ENCODE measurements at regions of chr1 and their contacts with region 1.

Region 1: GRCh38 chr1:172449585-172450534 is 6.0 kb upstream of the PIGC start:
- DNase-seq: peak; percentile 53
- H3K4me3 Mint-ChIP-seq: peak overlapping the region; percentile 7
- H3K27ac Mint-ChIP-seq: peak overlapping the region; percentile 26
- H3K4me1 Mint-ChIP-seq: peaks cover 31% of the 10 kb centered on the region
- H3K27me3 Mint-ChIP-seq: no peaks in the 10 kb centered on the region

Region 2: GRCh38 chr1:172588296-172589291 is 138.7 kb after region 1 on chr1:
- CTCF ChIA-PET with region 1: no interaction called
- intact Hi-C with region 1: loop called (anchors 5 kb)
- DNase-seq: peak; percentile 14
- H3K4me3 Mint-ChIP-seq: no peak overlapping the region
- H3K27ac Mint-ChIP-seq: peak overlapping the region; percentile 16
- H3K4me1 Mint-ChIP-seq: peaks cover 23% of the 10 kb centered on the region
- H3K27me3 Mint-ChIP-seq: no peaks in the 10 kb centered on the region

Region 3: DNA sequence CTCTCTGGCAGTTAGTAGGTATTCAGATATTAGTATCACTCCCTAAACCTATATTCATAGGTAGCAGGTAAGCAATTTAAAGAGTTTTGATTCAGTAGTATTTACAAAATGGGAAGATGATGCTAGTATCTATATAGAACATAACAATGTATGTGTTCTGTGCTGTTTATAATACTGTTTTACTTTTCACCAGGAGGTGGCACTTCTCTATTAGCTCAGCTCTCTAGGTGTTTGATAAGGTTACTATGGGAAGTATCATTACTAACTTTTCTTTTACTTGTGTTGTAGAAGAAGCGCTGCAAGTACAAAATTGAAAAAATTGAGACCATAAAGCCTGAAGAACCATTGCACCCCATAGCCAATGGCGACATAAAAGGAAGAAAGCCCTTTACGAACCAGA is 159.7 kb after region 1 on chr1:
- CTCF ChIA-PET with region 1: interaction called, 4 read pairs
- intact Hi-C with region 1: loop called (anchors 2 kb)
- DNase-seq: no peak
- H3K4me3 Mint-ChIP-seq: no peak overlapping the region
- H3K27ac Mint-ChIP-seq: no peak overlapping the region
- H3K4me1 Mint-ChIP-seq: peaks cover 2% of the 10 kb centered on the region
- H3K27me3 Mint-ChIP-seq: no peaks in the 10 kb centered on the region

Region 4: GRCh38 chr1:172727956-172728603 is 278.2 kb after region 1 on chr1:
- CTCF ChIA-PET with region 1: interaction called, 17 read pairs
- intact Hi-C with region 1: loop called (anchors 1 kb)
- DNase-seq: peak; percentile 71
- H3K4me3 Mint-ChIP-seq: no peak overlapping the region
- H3K27ac Mint-ChIP-seq: no peak overlapping the region
- H3K4me1 Mint-ChIP-seq: peaks cover 17% of the 10 kb centered on the region
- H3K27me3 Mint-ChIP-seq: no peaks in the 10 kb centered on the region